ENCODE measurements at regions of chr5 and their contacts with region 1.

Region 1: GRCh38 chr5:52725065-52725746 is 62.5 kb upstream of the ITGA1 start:
- DNase-seq: peak; percentile 95
- H3K4me3 ChIP-seq: no peak overlapping the region
- H3K27ac ChIP-seq: peak overlapping the region; percentile 51
- H3K4me1 ChIP-seq: peaks cover 38% of the 10 kb centered on the region
- H3K27me3 ChIP-seq: no peaks in the 10 kb centered on the region
- CTCF ChIP-seq: no peak

Region 2: GRCh38 chr5:52767766-52768480 is 42.7 kb after region 1 on chr5:
- CTCF ChIA-PET with region 1: no interaction called
- dilution Hi-C with region 1: loop called (anchors 5 kb)
- in situ Hi-C with region 1: no loop called
- intact Hi-C with region 1: no loop called
- DNase-seq: no peak
- H3K4me3 ChIP-seq: no peak overlapping the region
- H3K27ac ChIP-seq: no peak overlapping the region
- H3K4me1 ChIP-seq: no peaks in the 10 kb centered on the region
- H3K27me3 ChIP-seq: no peaks in the 10 kb centered on the region
- CTCF ChIP-seq: no peak

Region 3: DNA sequence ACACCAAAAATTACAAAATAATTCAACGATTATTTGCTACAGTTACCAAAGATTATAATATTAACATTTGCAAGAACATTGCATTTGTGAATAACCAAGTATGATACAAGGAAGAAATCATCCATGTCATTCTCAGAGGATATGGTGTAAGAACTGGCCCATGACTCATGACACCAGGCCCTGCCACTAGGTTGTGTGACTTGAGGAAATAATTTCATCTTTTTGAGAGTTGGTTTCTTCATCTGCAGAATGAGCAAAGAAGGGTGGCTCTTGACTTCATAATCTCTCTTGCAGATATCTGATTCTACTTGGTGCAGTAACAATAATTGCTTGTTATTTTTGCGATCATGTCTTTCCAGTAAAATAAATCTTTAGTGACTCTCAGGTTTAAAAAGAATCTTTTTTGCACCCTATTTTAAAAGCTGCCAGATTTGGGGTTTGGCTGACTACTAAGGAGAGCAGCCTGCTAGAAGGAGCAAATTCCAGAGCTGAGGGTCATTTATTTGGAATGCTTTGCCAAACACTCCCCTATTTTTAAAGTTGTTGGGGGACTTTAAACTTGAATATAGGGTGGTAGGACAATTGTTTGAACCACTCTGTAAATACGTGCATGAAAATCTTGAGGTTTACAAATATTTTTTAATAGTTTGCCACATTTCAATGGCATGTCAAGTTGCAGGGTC is 86.0 kb after region 1 on chr5:
- CTCF ChIA-PET with region 1: no interaction called
- dilution Hi-C with region 1: loop called (anchors 5 kb)
- in situ Hi-C with region 1: no loop called
- intact Hi-C with region 1: no loop called
- DNase-seq: peak; percentile 29
- H3K4me3 ChIP-seq: no peak overlapping the region
- H3K27ac ChIP-seq: no peak overlapping the region
- H3K4me1 ChIP-seq: peaks cover 24% of the 10 kb centered on the region
- H3K27me3 ChIP-seq: no peaks in the 10 kb centered on the region
- CTCF ChIP-seq: no peak

Measured in mammary epithelial cell (primary cell).